Activated CD4-positive, alpha-beta T cell treated with anti-CD3 and anti-CD28 coated beads for 36 hours (primary cell): ENCODE measurements at regions of chr5 and their contacts with region 1.

Region 1: DNA sequence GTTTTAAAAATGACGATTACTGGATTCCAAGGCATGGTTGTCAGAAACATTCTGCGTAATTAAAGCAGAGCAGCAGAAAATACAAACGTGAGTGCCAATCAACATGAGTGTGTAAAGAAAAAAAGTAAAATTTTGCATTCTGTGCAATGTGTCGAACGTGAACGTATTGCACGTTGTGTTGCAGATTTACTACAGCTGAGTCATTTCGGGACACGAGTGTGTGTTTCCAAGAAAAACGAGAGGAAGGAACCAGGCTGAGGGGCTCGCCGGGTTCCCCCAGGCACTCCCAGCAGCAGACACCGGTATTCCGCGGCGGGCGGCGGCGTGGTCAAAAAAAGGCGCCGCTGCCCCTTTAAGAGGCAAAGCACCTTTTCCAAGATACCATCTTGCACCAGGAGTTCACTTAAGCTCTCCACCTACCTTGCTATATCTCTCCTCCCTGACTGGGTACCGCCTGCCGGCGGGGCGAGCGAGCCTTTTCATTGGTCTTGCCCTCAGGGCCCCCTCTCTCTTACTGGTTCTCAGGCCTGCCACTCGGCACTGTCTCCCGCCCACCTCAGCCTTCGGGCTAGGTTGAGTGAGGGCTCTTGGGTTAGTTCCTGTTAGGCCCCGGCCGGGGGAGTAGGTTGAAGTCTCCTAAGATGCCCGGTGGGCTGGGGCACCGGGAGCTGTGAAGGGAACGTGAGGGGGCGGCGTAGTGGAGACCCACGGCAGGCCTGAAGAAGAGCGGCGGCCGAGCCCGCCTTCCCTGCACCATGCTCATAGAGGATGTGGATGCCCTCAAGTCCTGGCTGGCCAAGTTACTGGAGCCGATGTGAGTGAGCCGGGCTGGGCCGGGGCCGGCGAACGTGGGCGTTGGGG is at the start of gene RBM27:
- DNase-seq: peak; percentile 97
- ATAC-seq: peak; percentile 99
- H3K4me3 Mint-ChIP-seq: no peak within 1 kb of the TSS
- H3K27ac Mint-ChIP-seq: no peak within 1 kb of the TSS
- H3K4me1 Mint-ChIP-seq: peaks cover 23% of the 10 kb centered on the region
- H3K27me3 Mint-ChIP-seq: no peaks in the 10 kb centered on the region
- total RNA-seq, gene RBM27: 25.6 to 68.0 TPM

Region 2: GRCh38 chr5:145936401-145937131 is 266.7 kb before region 1 on chr5 and contains the start of gene SH3RF2:
- CTCF ChIA-PET with region 1: no interaction called
- POLR2A ChIA-PET with region 1: no interaction called
- intact Hi-C with region 1: loop called in 1 of 2 experiments (anchors 5 kb)
- DNase-seq: peak; percentile 74
- ATAC-seq: peak; percentile 66
- H3K4me3 Mint-ChIP-seq: peak within 1 kb of the TSS; percentile 58
- H3K27ac Mint-ChIP-seq: peak within 1 kb of the TSS; percentile 63
- H3K4me1 Mint-ChIP-seq: peaks cover 37% of the 10 kb centered on the region
- H3K27me3 Mint-ChIP-seq: peaks cover 69% of the 10 kb centered on the region
- total RNA-seq, gene SH3RF2: 0.43 to 0.63 TPM

Region 3: DNA sequence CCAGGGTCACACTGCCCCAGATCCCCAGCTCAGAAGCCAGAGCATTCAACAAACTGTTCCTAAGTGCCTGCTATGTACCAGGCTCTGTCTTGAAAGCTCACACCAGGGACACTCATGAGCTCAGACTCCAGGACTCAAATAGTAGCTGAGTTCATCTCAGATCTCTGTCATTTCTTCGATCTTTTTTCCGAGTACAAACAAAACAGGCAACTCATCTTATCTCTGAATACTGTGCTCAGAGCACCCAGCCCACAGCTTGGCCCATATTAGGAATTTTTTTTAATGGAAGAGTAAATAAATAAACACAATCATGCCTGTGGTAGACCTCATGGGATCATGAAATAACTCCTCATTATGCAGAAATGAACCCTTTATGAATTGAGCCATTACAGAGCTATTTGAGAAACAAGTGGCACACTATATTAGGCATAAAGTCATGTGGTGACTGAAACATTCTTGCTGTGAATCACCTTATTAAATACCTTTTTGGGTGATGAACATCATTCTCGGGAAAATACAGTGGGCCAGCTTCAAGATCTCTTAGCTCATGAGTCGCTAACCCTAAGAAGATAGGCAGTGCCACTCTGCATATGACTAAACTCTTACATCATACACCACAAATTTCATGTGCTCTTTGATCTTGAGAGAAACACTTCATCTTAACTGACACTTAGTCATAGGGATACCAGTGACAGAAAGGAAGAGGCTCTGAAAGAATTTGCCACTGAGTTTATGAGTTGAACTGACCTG is 257.0 kb before region 1 on chr5:
- CTCF ChIA-PET with region 1: no interaction called
- POLR2A ChIA-PET with region 1: no interaction called
- intact Hi-C with region 1: loop called in 1 of 2 experiments (anchors 2 kb)
- DNase-seq: peak; percentile 37
- ATAC-seq: peak; percentile 81
- H3K4me3 Mint-ChIP-seq: no peak overlapping the region
- H3K27ac Mint-ChIP-seq: no peak overlapping the region
- H3K4me1 Mint-ChIP-seq: peaks cover 32% of the 10 kb centered on the region
- H3K27me3 Mint-ChIP-seq: peaks cover 47% of the 10 kb centered on the region

Region 4: GRCh38 chr5:145975361-145976066 is 227.7 kb before region 1 on chr5:
- CTCF ChIA-PET with region 1: no interaction called
- POLR2A ChIA-PET with region 1: no interaction called
- intact Hi-C with region 1: no loop called
- DNase-seq: peak; percentile 8
- ATAC-seq: no peak
- H3K4me3 Mint-ChIP-seq: no peak overlapping the region
- H3K27ac Mint-ChIP-seq: no peak overlapping the region
- H3K4me1 Mint-ChIP-seq: peaks cover 4% of the 10 kb centered on the region
- H3K27me3 Mint-ChIP-seq: peaks cover 8% of the 10 kb centered on the region

Region 5: DNA sequence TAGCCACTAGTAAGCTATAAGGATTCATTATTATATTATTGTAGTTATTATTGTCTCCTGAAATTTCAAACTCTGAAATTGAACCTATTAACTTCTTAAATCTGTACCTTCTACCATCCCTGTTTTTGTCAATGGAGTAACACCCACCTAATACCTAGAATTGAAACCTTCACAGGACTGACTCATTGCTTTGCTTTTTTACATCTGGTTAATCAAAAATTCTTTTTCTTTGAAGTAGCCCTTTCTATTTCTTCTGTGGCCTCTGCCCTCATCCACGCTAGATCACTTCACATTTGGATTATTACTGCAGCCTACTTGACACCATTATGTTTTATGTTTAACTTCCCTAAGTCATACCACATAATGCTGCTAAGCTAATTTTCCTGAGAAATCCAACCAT is 35.7 kb after region 1 on chr5:
- CTCF ChIA-PET with region 1: interaction called, 3 read pairs
- POLR2A ChIA-PET with region 1: no interaction called
- intact Hi-C with region 1: loop called in 1 of 2 experiments (anchors 5 kb)
- DNase-seq: no peak
- ATAC-seq: peak; percentile 93
- H3K4me3 Mint-ChIP-seq: no peak overlapping the region
- H3K27ac Mint-ChIP-seq: peak overlapping the region; percentile 5
- H3K4me1 Mint-ChIP-seq: peaks cover 10% of the 10 kb centered on the region
- H3K27me3 Mint-ChIP-seq: no peaks in the 10 kb centered on the region

Region 6: DNA sequence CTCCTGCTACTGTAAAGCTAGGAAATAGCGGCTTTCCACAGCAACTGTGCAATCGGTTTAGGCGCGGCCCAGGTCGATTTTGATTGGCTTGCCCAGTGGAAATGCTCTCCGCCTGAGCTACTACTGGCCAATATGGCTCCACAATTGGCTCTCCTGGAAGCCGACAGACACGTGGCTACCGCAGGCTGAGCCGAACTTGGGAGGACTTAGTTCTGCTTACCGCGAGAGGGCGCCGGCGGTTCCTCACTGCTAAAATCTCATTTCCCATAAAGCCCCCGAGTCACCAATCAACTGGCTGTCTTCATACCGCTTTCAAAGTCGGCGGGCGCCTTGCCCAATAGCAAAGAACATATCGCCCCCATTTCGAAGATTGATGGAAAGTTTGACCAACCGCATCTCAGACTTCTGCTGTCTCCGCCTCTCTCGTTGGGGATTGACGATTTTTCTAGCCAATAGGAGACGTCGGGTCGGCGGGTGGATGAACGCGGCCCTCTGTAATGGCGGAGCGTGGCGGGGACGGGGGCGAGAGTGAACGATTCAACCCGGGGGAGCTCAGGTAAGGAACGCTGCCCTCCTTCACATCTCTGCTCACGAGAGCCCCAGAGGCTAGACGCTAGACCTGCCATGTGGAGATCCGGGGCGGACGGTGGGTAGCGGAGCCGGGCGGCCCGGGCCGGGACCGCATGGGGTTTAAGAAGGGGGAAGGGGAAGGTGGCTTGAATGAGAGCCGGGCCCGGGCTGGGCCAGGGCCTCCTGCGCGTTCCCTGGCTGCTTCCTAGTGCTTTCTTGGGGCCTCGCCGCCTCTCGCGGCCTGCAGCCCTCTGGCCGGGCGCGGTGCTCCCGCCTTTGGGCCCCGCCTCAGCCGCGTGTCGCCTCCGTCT is 243.9 kb after region 1 on chr5 and contains the start of gene TCERG1:
- CTCF ChIA-PET with region 1: interaction called, 3 read pairs
- POLR2A ChIA-PET with region 1: interaction called, 3 read pairs
- intact Hi-C with region 1: loop called (anchors 1 to 5 kb)
- DNase-seq: peak; percentile 99
- ATAC-seq: peak; percentile 92
- H3K4me3 Mint-ChIP-seq: peak within 1 kb of the TSS; percentile 100
- H3K27ac Mint-ChIP-seq: peak within 1 kb of the TSS; percentile 100
- H3K4me1 Mint-ChIP-seq: peaks cover 35% of the 10 kb centered on the region
- H3K27me3 Mint-ChIP-seq: no peaks in the 10 kb centered on the region
- total RNA-seq, gene TCERG1: 126 to 132 TPM